Lower lobe of right lung (tissue), 2 donors: ENCODE measurements at regions of chr19 and their contacts with region 1.

Region 1: DNA sequence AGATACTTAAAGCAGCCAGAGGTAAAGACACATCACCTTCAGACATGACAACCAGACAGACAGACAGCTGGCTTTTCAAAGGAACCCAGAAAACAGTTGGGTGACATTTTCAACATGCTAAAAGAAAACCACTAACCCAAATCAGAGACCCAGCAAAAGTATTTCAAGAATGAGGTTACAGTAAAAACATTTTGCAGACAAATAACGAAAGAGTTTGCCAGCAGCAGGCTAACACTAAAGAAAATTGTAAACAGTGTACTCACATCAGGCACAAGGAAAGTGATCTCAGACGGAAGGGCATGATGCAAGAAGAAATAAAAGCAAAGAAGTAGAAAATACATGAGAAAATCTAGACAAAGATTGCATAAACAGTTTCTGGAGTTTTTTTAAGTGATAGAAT is 46.4 kb downstream of the AP1M1 start:
- DNase-seq: no peak
- ATAC-seq: no peak
- H3K4me3 ChIP-seq: no peak overlapping the region
- H3K27ac ChIP-seq: no peak overlapping the region
- H3K4me1 ChIP-seq: peaks cover 3% of the 10 kb centered on the region
- H3K27me3 ChIP-seq: no peaks in the 10 kb centered on the region
- CTCF ChIP-seq: no peak

Region 2: GRCh38 chr19:16185123-16185767 is 58.8 kb before region 1 on chr19 and contains the start of gene FAM32A:
- intact Hi-C with region 1: no loop called
- DNase-seq: peak; percentile 98
- ATAC-seq: peak; percentile 98
- H3K4me3 ChIP-seq: peak within 1 kb of the TSS; percentile 93
- H3K27ac ChIP-seq: peak within 1 kb of the TSS; percentile 90
- H3K4me1 ChIP-seq: peaks cover 22% of the 10 kb centered on the region
- H3K27me3 ChIP-seq: no peaks in the 10 kb centered on the region
- CTCF ChIP-seq: peak; percentile 36
- total RNA-seq, gene FAM32A: 59.9 TPM

Region 3: DNA sequence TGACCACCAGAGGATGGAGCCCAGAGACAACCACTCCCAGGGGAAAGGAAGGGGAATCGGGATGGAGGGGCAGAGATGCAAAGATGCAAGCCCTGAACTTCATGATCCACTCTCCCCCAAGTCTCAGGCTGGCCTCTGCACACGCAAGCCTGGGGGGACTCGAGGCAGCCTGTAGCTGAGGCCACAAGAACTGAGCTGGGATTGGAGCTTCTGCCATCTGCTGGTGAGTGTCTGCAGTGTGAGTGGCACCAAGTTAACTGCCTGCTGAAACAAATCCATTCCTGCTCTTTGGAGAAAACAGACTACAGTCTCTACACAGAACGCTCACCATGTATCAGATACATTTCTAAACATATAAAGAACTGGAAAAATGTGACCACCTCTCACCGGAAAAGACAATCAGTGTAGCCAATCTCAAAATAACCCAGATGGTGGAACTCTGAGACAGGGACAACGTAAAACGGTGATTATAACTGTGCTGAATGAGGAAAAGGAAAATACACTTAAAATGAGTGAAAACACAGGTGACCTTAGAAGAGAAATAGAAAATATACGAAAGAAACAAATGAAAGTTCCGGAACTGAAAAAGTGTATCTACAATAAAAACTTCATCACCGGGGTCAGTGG is 142.6 kb after region 1 on chr19:
- intact Hi-C with region 1: loop called (anchors 5 kb)
- DNase-seq: no peak
- ATAC-seq: peak; percentile 35 to 45
- H3K4me3 ChIP-seq: no peak overlapping the region
- H3K27ac ChIP-seq: no peak overlapping the region
- H3K4me1 ChIP-seq: peaks cover 28% of the 10 kb centered on the region
- H3K27me3 ChIP-seq: no peaks in the 10 kb centered on the region
- CTCF ChIP-seq: peak; percentile 75